ENCODE measurements at regions of chr9 and their contacts with region 1.

Region 1: GRCh38 chr9:71249729-71250317 is 128.4 kb upstream of the TRPM3 start:
- DNase-seq: no peak
- ATAC-seq: peak; percentile 35

Region 2: GRCh38 chr9:70639853-70640814 is 609.7 kb before region 1 on chr9:
- intact Hi-C with region 1: loop called (anchors 5 kb)
- DNase-seq: no peak
- ATAC-seq: peak; percentile 61

Region 3: DNA sequence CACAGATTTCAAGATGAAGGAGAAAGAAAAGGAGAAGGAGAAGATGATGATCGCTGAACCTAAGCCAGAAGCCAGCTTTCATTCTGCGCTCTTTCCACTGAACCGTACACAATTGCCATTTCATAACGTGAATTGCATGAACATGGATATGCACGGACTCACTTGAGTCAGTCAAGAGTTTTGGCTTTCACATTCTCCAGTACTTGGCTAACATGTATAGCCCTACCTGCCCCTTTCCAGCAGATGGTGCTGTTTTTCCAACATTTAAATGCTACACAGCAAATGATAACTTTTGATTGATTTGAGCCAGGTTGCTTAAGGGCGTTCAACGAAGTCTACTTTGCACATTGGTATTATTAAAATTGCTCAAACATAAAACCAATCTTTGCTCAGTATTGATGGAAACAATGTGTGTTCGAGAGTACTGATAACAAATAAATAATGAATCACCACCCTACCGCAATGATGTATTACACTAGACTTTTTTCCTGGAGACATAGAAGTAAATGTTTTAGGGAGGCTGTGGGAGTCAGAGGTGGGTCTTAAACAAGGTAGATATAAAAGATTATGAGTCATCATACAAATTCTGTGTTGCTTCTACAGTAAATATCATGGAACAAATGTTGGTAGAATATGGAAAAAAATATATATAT is 324.8 kb before region 1 on chr9:
- intact Hi-C with region 1: loop called (anchors 10 kb)
- DNase-seq: no peak
- ATAC-seq: peak; percentile 92

Region 4: GRCh38 chr9:71179183-71179582 is 70.6 kb before region 1 on chr9:
- intact Hi-C with region 1: no loop called
- DNase-seq: no peak
- ATAC-seq: no peak